Activated CD4-positive, alpha-beta memory T cell treated with anti-CD3 and anti-CD28 coated beads for 36 hours (primary cell): ENCODE measurements at regions of chr7 and their contacts with region 1.

Region 1: DNA sequence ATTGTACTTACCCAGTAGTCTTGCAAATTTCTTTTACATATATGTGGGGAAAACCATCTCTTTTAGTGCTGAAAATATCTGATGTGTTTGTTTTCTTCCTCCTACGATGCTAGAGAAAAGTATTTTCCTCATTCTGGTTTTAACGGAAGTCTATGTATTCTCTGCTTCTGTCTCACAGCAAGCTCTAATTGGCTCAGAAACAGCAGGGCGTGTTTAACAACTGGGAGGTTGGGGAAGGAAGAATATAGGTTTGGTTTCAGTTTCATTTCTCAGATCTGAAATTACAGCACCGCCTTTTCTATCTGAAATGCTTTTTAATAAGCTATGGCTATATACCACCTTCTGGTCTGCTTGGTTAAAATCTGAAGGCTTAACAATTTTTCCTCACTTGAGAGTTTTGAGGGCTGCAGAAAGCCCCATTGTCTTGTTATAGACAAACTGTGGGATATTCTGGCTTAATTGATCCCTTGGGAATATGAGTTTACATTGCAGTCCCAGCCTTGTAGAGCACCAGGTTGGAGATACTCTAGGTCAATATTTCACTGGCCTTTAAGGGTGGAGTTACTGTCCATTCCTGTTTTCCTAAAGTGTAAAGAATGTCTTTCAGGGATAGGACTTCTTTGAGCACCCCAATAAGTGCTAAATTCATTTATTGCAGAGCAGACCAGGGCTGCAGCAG is at the start of gene SAMD9:
- DNase-seq: peak; percentile 55
- H3K4me3 Mint-ChIP-seq: peak within 1 kb of the TSS; percentile 69
- H3K27ac Mint-ChIP-seq: peak within 1 kb of the TSS; percentile 69
- H3K4me1 Mint-ChIP-seq: peaks cover 50% of the 10 kb centered on the region
- H3K27me3 Mint-ChIP-seq: no peaks in the 10 kb centered on the region
- total RNA-seq, gene SAMD9: 6.9 to 7.2 TPM

Region 2: GRCh38 chr7:92843034-92843760 is 274.8 kb before region 1 on chr7:
- CTCF ChIA-PET with region 1: no interaction called
- POLR2A ChIA-PET with region 1: no interaction called
- intact Hi-C with region 1: loop called (anchors 5 kb)
- DNase-seq: no peak
- H3K4me3 Mint-ChIP-seq: no peak overlapping the region
- H3K27ac Mint-ChIP-seq: no peak overlapping the region
- H3K4me1 Mint-ChIP-seq: peaks cover 8% of the 10 kb centered on the region
- H3K27me3 Mint-ChIP-seq: peaks cover 9% of the 10 kb centered on the region

Region 3: GRCh38 chr7:93036807-93037206 is 81.2 kb before region 1 on chr7:
- CTCF ChIA-PET with region 1: no interaction called
- POLR2A ChIA-PET with region 1: no interaction called
- intact Hi-C with region 1: loop called (anchors 1 kb)
- DNase-seq: peak; percentile 64
- H3K4me3 Mint-ChIP-seq: no peak overlapping the region
- H3K27ac Mint-ChIP-seq: peak overlapping the region; percentile 53
- H3K4me1 Mint-ChIP-seq: peaks cover 22% of the 10 kb centered on the region
- H3K27me3 Mint-ChIP-seq: no peaks in the 10 kb centered on the region

Region 4: DNA sequence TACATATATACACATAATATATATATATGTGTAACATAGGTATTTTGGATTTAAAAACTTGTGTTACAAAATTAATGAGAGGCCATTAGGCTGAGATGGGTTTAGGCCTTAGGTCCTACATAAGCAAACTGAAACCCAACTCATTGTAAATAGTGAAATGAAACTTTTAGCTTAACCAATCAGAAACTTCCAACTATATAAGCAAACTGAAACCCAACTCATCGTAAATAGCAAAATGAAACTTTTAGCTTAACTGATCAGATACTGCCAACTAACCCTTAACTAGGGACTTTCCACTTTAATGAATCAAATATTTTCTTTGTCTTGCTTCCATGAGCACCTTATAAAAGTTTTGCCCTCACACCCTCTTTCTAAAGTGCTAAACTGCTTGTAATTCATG is 47.5 kb after region 1 on chr7:
- CTCF ChIA-PET with region 1: no interaction called
- POLR2A ChIA-PET with region 1: no interaction called
- intact Hi-C with region 1: loop called (anchors 1 kb)
- DNase-seq: no peak
- H3K4me3 Mint-ChIP-seq: no peak overlapping the region
- H3K27ac Mint-ChIP-seq: no peak overlapping the region
- H3K4me1 Mint-ChIP-seq: peaks cover 9% of the 10 kb centered on the region
- H3K27me3 Mint-ChIP-seq: no peaks in the 10 kb centered on the region

Region 5: GRCh38 chr7:94004024-94004951 is 886.3 kb after region 1 on chr7 and contains the start of gene BET1:
- CTCF ChIA-PET with region 1: no interaction called
- POLR2A ChIA-PET with region 1: no interaction called
- intact Hi-C with region 1: loop called (anchors 5 kb)
- DNase-seq: peak; percentile 94
- H3K4me3 Mint-ChIP-seq: peak within 1 kb of the TSS; percentile 95
- H3K27ac Mint-ChIP-seq: peak within 1 kb of the TSS; percentile 92
- H3K4me1 Mint-ChIP-seq: peaks cover 37% of the 10 kb centered on the region
- H3K27me3 Mint-ChIP-seq: peaks cover 8% of the 10 kb centered on the region
- total RNA-seq, gene BET1: 19.3 to 20.5 TPM